SK-MEL-5 (cell line): ENCODE measurements at regions of chr10 and their contacts with region 1.

Region 1: DNA sequence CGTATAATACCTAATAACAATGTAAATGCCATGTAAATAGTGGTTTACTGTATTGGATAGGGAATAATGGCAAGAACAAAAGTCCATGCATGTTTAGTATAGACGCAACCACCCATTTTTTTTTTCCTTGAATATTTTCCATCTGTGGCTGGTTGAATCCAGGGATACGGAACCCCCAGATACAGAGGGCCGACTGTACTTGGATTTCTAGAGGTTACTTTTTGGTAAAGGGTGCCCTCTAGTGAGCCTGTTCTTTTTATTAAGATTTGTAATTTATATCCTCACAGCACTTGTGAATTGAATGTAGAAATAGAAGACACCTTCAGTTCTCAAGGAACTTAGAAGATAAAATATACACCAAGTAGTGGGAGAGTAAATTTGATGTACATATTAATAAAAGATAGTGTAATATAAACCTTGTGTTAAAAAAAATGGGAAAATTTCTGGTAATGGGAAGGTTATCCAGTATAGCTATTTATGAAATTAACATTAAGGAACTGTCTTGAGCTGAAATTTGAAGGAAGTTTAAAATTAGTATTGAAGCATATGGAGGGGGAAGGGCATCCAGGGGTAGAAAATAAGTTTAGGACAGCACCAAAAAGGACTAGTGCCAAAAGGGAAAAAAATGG is 32.0 kb downstream of the EXOC6 start:
- DNase-seq: peak; percentile 63

Region 2: DNA sequence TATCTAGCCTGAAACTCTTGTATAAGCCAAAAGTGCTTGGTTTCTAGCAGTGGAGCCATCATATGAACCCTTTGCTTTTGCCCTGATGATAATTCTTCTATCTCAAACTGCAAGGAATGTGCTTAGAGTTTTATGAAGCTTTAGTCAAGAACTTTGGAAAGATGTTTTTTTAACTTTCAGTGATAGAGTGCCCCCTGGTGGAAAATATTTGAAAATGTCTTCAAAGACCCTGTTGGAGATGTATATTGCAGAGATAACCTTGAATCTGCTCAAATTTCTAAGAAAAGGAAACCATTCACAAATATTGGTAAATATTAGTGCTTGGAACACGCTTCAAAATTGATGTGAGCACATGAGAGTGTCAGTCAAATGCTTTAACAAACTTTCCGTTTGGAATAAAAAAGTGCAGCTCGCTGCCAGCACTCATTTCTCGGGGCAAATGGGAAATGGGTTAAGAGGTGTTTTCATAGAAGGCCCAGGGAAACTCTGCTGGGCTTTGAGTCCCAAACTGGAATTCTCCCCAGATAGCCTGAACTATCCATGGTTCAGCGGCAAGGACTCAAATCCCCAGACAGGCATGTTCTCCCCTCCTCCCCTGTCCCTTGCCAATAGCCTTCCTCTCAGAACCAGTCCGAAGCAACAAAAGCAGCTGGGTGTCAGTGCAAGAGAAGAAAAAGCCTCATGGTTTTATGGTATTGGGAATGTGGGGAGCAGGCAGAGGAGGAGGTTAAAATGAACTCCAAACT is 472.5 kb after region 1 on chr10:
- in situ Hi-C with region 1: loop called (anchors 25 kb)
- DNase-seq: peak; percentile 54